ENCODE measurements at regions of chr17 and their contacts with region 1.

Region 1: DNA sequence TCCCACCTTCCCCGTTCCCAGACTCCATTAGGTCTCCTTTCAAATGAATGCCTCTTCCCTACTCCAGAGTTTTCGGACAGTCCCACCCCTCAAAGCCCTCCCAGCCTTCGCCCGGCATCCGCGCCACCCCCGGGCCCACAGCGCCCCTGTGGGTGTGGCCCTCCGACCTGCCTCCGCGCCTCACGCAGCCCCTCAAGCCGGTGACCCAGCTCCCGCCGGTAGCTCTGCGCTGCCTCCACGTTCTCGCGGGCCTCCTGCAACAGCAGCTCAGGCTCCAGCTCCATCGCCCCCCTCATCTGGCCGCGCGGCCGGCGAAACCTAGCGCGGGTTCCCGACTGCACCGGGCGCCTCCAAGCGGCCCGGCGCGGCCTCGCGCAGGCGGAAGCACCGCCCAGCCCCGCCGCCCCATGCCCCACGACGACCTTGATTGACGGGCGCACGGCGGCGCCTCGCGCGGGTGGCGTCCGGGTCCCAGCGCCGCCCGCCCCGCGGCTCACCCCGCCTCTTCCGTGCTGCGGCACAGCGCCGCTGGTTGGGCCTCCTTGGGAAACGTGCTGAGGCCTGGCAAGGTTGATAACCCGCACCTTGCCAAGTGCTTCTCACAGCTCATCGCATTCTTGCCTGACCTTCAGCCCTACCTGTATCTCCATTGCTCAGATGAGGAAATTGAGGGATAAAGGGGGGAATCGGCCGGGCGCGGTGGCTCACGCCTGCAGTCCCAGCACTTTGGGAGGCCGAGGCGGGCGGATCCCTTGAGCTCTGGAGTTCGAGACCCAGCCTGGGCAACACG is at the start of gene CRLF3:
- DNase-seq: peak; percentile 87 to 96
- ATAC-seq: peak; percentile 94 to 100 (median 96)
- H3K4me3 ChIP-seq: peak within 1 kb of the TSS; percentile 96
- H3K4me3 Mint-ChIP-seq: peak within 1 kb of the TSS; percentile 94
- H3K27ac ChIP-seq: peak within 1 kb of the TSS; percentile 81
- H3K27ac Mint-ChIP-seq: peak within 1 kb of the TSS; percentile 88 to 94
- H3K4me1 ChIP-seq: peaks cover 35% of the 10 kb centered on the region
- H3K4me1 Mint-ChIP-seq: peaks cover 34 to 36% of the 10 kb centered on the region in 2 donors
- H3K27me3 ChIP-seq: no peaks in the 10 kb centered on the region
- H3K27me3 Mint-ChIP-seq: no peaks in the 10 kb centered on the region
- CTCF ChIP-seq: peak; percentile 59
- total RNA-seq, gene CRLF3: 49.0 to 89.0 (median 62.2) TPM

Region 2: DNA sequence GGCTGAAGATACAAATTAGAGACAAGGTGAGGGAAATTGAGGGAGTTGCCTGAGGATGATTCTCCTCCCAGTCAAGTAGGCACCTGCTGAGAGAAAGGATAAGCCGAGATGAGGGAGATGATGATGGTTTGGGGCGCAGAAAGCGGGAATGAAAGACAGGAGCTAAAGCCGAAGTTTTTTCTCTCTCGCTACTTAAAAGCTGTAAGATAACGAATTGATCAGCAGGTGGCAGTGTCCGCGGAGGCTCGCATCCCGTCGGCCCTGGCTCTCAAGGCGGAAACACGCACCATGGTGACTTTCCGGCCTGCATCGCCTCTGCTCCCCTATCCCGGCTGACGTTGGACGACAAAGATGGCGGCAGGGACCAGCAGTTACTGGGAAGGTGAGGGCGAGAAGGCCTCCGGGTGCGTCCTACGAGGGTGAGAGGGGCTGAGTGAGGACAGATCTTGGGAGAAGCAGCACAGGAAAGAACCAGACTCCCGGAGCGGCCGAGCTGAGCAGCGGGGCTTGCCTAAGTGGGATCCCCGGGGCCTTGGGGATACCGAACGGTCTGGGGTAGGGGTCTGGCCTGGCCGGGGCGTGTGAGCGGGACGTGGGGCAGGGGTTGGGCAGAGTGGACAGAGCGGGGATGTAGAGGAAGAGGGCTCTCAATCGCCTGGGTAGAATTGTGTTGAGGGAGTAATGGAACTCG is 347.3 kb before region 1 on chr17 and contains the start of gene GOSR1:
- intact Hi-C with region 1: loop called (anchors 10 kb)
- DNase-seq: peak; percentile 86 to 98
- ATAC-seq: peak; percentile 96 to 99 (median 98)
- H3K4me3 ChIP-seq: peak within 1 kb of the TSS; percentile 78
- H3K4me3 Mint-ChIP-seq: peak within 1 kb of the TSS; percentile 99
- H3K27ac ChIP-seq: peak within 1 kb of the TSS; percentile 85
- H3K27ac Mint-ChIP-seq: peak within 1 kb of the TSS; percentile 99
- H3K4me1 ChIP-seq: peaks cover 12% of the 10 kb centered on the region
- H3K4me1 Mint-ChIP-seq: peaks cover 21 to 28% of the 10 kb centered on the region in 2 donors
- H3K27me3 ChIP-seq: peaks cover 3% of the 10 kb centered on the region
- H3K27me3 Mint-ChIP-seq: no peaks in the 10 kb centered on the region
- CTCF ChIP-seq: peak; percentile 71
- total RNA-seq, gene GOSR1: 45.0 to 57.5 (median 54.4) TPM

Region 3: GRCh38 chr17:30808785-30809286 is 15.7 kb before region 1 on chr17:
- intact Hi-C with region 1: loop called (anchors 2 kb)
- DNase-seq: peak in 1 of 2 donors; percentile 84
- ATAC-seq: peak; percentile 86 to 94 (median 92)
- H3K4me3 ChIP-seq: no peak overlapping the region
- H3K4me3 Mint-ChIP-seq: peak overlapping the region; percentile 86
- H3K27ac ChIP-seq: peak overlapping the region; percentile 79
- H3K27ac Mint-ChIP-seq: peak overlapping the region; percentile 94 to 96
- H3K4me1 ChIP-seq: peaks cover 57% of the 10 kb centered on the region
- H3K4me1 Mint-ChIP-seq: peaks cover 44 to 50% of the 10 kb centered on the region in 2 donors
- H3K27me3 ChIP-seq: no peaks in the 10 kb centered on the region
- H3K27me3 Mint-ChIP-seq: no peaks in the 10 kb centered on the region
- CTCF ChIP-seq: no peak

Measured in natural killer cell (primary cell).